Dendritic cell treated with granulocyte-macrophage colony-stimulating factor and Interleukin-4, amounts not matched to agents 40 ng/mL and 50 ng/mL, for 4 days (primary cell): ENCODE measurements at regions of chr10 and their contacts with region 1.

Region 1: GRCh38 chr10:22228943-22229801 is 11.4 kb upstream of the EBLN1 start:
- H3K4me3 Mint-ChIP-seq: peak overlapping the region; percentile 76
- H3K27ac Mint-ChIP-seq: peak overlapping the region; percentile 86
- H3K4me1 Mint-ChIP-seq: peaks cover 10% of the 10 kb centered on the region
- H3K27me3 Mint-ChIP-seq: peaks cover 2% of the 10 kb centered on the region

Region 2: GRCh38 chr10:21525367-21526183 is 703.6 kb before region 1 on chr10 and contains the start of gene SKIDA1:
- intact Hi-C with region 1: loop called (anchors 10 kb)
- H3K4me3 Mint-ChIP-seq: peak within 1 kb of the TSS; percentile 88
- H3K27ac Mint-ChIP-seq: peak within 1 kb of the TSS; percentile 97
- H3K4me1 Mint-ChIP-seq: peaks cover 30% of the 10 kb centered on the region
- H3K27me3 Mint-ChIP-seq: peaks cover 10% of the 10 kb centered on the region

Region 3: DNA sequence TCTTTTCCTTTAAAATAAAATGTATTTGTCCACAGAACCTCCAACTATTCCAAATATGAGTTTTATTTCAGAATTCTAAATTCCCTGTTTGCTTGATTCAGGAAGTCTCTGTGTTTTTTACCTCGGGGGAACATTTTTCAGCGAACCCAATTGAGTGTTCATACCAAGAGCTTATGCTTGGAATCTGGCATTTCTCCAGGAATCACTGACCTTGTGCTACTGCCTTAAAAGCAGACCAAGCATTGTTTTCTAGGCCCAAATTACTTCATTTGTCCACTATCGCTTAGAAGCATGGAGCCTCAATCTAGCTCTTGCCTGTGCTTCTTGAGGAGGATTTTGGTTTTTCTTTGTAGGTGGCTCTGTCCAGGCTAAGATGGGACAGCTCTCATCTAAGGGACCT is 70.7 kb before region 1 on chr10:
- intact Hi-C with region 1: no loop called
- H3K4me3 Mint-ChIP-seq: no peak overlapping the region
- H3K27ac Mint-ChIP-seq: no peak overlapping the region
- H3K4me1 Mint-ChIP-seq: peaks cover 8% of the 10 kb centered on the region
- H3K27me3 Mint-ChIP-seq: no peaks in the 10 kb centered on the region

Region 4: GRCh38 chr10:22183771-22184461 is 45.3 kb before region 1 on chr10:
- intact Hi-C with region 1: no loop called
- H3K4me3 Mint-ChIP-seq: no peak overlapping the region
- H3K27ac Mint-ChIP-seq: no peak overlapping the region
- H3K4me1 Mint-ChIP-seq: no peaks in the 10 kb centered on the region
- H3K27me3 Mint-ChIP-seq: no peaks in the 10 kb centered on the region

Region 5: GRCh38 chr10:22316285-22317120 is 87.3 kb after region 1 on chr10 and contains the start of gene COMMD3:
- intact Hi-C with region 1: loop called (anchors 2 kb)
- H3K4me3 Mint-ChIP-seq: peak within 1 kb of the TSS; percentile 94
- H3K27ac Mint-ChIP-seq: peak within 1 kb of the TSS; percentile 95
- H3K4me1 Mint-ChIP-seq: peaks cover 6% of the 10 kb centered on the region
- H3K27me3 Mint-ChIP-seq: no peaks in the 10 kb centered on the region

Region 6: DNA sequence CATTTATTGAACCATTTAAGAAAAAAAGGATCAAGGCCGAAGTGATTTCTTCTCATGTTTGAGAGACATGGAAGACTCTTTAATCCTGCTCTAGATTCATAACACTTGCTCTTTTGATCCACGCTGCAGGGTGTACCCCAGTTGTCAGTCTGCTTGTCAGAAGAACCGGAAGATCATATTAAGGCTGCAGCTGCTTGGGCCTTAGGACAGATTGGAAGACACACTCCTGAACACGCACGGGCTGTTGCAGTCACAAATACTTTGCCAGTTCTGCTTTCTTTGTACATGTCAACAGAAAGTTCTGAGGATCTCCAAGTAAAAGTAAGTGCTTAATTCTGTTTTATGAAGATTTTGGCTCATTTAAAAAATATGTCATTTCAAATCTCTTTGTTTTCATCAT is 162.4 kb after region 1 on chr10:
- intact Hi-C with region 1: no loop called
- H3K4me3 Mint-ChIP-seq: no peak overlapping the region
- H3K27ac Mint-ChIP-seq: no peak overlapping the region
- H3K4me1 Mint-ChIP-seq: no peaks in the 10 kb centered on the region
- H3K27me3 Mint-ChIP-seq: peaks cover 3% of the 10 kb centered on the region